ENCODE measurements at regions of chr9 and their contacts with region 1.

Region 1: DNA sequence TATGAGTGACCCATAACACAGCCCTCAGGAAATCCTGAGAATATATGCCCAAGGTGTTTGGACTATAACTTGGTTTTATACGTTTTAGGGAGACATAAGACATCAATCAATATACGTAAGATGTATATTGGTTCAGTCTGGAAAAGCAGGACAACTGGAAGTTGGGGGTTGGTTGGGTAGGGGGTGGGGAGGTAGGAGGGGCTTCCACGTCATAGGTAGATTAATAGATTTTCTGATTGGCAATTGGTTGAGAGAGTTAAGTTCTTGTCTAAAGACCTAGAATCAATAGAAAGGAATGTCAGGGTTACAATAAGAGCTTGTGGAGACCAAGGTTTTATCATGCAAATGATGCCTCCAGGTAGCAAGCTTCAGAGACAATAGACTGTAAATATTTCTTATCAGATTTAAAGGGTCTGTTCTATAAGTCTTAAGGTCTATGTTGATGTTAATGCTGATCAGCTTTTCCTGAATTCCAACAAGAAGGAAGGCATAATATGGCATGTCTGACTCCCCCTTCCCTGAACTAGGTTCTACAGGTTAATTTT is 2267.7 kb upstream of the ACO1 start:
- DNase-seq: no peak
- H3K4me3 ChIP-seq: no peak overlapping the region
- H3K4me3 Mint-ChIP-seq: no peak overlapping the region
- H3K27ac ChIP-seq: no peak overlapping the region
- H3K27ac Mint-ChIP-seq: no peak overlapping the region
- H3K4me1 ChIP-seq: no peaks in the 10 kb centered on the region
- H3K4me1 Mint-ChIP-seq: no peaks in the 10 kb centered on the region
- H3K27me3 ChIP-seq: no peaks in the 10 kb centered on the region
- H3K27me3 Mint-ChIP-seq: no peaks in the 10 kb centered on the region
- CTCF ChIP-seq: no peak

Region 2: DNA sequence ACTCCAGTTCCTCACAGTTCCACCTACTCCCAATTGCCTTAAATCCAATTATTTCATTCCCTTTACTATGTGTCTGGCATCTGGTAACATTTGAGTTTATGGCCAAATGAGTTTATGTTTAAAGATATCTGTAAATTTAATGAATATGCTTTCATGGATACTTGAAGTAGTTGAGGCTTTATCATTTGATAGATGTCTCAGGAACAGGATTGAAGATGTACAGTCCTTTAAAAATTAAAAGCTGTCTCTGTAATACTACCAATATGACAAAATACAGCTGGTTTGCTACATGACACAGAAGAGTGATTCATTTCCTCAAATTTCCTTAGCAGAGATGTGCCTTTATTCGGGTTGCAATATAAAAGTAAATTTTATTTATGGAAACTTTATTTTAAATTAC is 58.3 kb before region 1 on chr9:
- intact Hi-C with region 1: loop called in 1 of 2 experiments (anchors 10 kb)
- DNase-seq: no peak
- H3K4me3 ChIP-seq: no peak overlapping the region
- H3K4me3 Mint-ChIP-seq: no peak overlapping the region
- H3K27ac ChIP-seq: no peak overlapping the region
- H3K27ac Mint-ChIP-seq: no peak overlapping the region
- H3K4me1 ChIP-seq: no peaks in the 10 kb centered on the region
- H3K4me1 Mint-ChIP-seq: no peaks in the 10 kb centered on the region
- H3K27me3 ChIP-seq: no peaks in the 10 kb centered on the region
- H3K27me3 Mint-ChIP-seq: peaks cover 0 to 1% (median 0%) of the 10 kb centered on the region in 3 donors
- CTCF ChIP-seq: no peak